Heart left ventricle (tissue), 16 donors: ENCODE measurements at regions of chr3 and their contacts with region 1.

Region 1: GRCh38 chr3:136818769-136819391 is at the start of gene SLC35G2:
- DNase-seq: peak; percentile 57 to 78 (median 77)
- ATAC-seq: peak; percentile 68 to 83 (median 78)
- H3K4me3 ChIP-seq: peak within 1 kb of the TSS; percentile 63 to 92 (median 77)
- H3K27ac ChIP-seq: peak within 1 kb of the TSS; percentile 73 to 97 (median 88)
- H3K4me1 ChIP-seq: peaks cover 0 to 32% (median 8%) of the 10 kb centered on the region in 12 donors
- H3K27me3 ChIP-seq: peaks cover 0 to 17% (median 0%) of the 10 kb centered on the region in 9 donors
- CTCF ChIP-seq: peak in 2 of 12 donors; percentile 9 to 23
- POLR2A ChIP-seq: no peak
- total RNA-seq, gene SLC35G2: 1.0 to 5.3 (median 3.6) TPM

Region 2: GRCh38 chr3:136861890-136862616 is 43.2 kb after region 1 on chr3 and contains the start of gene NCK1:
- intact Hi-C with region 1: loop called in 5 of 10 experiments (anchors 5 kb)
- DNase-seq: peak; percentile 99
- ATAC-seq: peak; percentile 99 to 100 (median 99)
- H3K4me3 ChIP-seq: peak within 1 kb of the TSS; percentile 61 to 95 (median 83)
- H3K27ac ChIP-seq: peak within 1 kb of the TSS; percentile 72 to 95 (median 90)
- H3K4me1 ChIP-seq: peaks cover 0 to 51% (median 23%) of the 10 kb centered on the region in 12 donors
- H3K27me3 ChIP-seq: no peaks in the 10 kb centered on the region
- CTCF ChIP-seq: peak in 5 of 12 donors; percentile 6 to 26 (median 17)
- POLR2A ChIP-seq: peak; percentile 19 to 92
- total RNA-seq, gene NCK1: 18.7 to 36.0 (median 23.4) TPM

Region 3: GRCh38 chr3:136929984-136930670 is 111.2 kb after region 1 on chr3:
- intact Hi-C with region 1: loop called in 2 of 10 experiments (anchors 2 to 5 kb)
- DNase-seq: peak in 4 of 5 donors; percentile 47 to 68 (median 63)
- ATAC-seq: peak; percentile 67 to 85 (median 78)
- H3K4me3 ChIP-seq: peak overlapping the region in 11 of 12 donors; percentile 8 to 57 (median 40)
- H3K27ac ChIP-seq: peak overlapping the region in 11 of 12 donors; percentile 12 to 73 (median 54)
- H3K4me1 ChIP-seq: peaks cover 0 to 58% (median 18%) of the 10 kb centered on the region in 12 donors
- H3K27me3 ChIP-seq: no peaks in the 10 kb centered on the region
- CTCF ChIP-seq: no peak
- POLR2A ChIP-seq: no peak

Region 4: DNA sequence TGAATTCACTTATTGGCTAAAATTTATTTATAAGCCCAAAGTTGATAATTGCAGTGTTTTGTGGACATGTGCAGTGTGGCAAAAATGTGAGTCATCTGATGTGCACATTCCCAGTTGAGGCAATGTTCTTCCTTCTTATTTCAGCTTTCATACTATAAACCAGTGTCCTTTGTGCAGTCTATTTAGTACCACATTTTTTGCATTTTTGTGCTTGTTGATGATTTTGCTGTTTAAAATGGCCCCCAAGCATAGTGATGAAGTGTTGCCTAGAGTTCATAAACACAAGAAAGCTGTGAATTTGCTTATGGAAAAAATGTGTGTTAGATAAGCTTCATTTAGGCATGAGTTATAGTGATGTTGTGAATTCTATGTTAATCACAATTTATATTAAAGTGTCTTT is 119.5 kb after region 1 on chr3:
- intact Hi-C with region 1: loop called in 1 of 10 experiments (anchors 5 kb)
- DNase-seq: no peak
- ATAC-seq: no peak
- H3K4me3 ChIP-seq: no peak overlapping the region
- H3K27ac ChIP-seq: peak overlapping the region in 3 of 12 donors; percentile 0 to 16 (median 11)
- H3K4me1 ChIP-seq: peaks cover 0 to 73% (median 12%) of the 10 kb centered on the region in 12 donors
- H3K27me3 ChIP-seq: no peaks in the 10 kb centered on the region
- CTCF ChIP-seq: no peak
- POLR2A ChIP-seq: no peak

Region 5: DNA sequence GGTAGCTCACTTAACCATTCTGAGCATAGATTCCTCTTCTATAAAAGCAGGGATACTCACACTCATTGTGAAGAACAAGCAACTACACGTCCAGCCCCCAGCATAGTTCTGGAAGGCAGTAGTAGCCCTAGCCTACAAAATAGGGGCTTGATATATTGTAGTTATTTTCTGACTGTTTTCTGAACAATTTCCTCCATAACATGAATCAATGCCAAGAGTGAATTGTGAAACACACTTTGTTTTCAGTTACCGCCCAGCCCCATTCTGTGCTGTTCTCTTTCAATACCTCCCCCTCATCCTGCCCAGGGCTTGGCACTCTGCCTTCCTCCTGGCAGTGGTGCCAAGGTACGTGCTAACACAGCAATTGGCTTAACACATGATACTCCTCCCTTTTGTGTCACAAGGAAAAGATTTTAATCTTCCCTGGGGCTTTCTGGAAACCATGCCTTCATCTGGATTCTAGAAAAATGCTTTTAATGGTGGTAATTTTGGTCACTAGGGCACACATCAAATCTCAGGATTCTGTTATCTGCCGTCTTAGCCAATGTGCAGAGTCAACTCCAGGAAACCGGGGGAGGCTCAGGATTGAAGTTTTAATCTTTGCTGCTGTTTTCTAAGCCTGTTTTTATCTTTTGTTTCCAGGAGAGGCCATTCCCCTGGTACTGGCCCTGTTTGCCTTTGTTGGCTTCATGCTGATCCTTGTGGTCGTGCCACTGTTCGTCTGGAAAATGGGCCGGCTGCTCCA is 176.1 kb after region 1 on chr3:
- intact Hi-C with region 1: loop called in 2 of 10 experiments (anchors 1 to 2 kb)
- DNase-seq: peak; percentile 76 to 85 (median 82)
- ATAC-seq: peak; percentile 89 to 97 (median 92)
- H3K4me3 ChIP-seq: no peak overlapping the region
- H3K27ac ChIP-seq: peak overlapping the region; percentile 54 to 89 (median 78)
- H3K4me1 ChIP-seq: peaks cover 0 to 27% (median 17%) of the 10 kb centered on the region in 12 donors
- H3K27me3 ChIP-seq: no peaks in the 10 kb centered on the region
- CTCF ChIP-seq: no peak
- POLR2A ChIP-seq: no peak

Region 6: DNA sequence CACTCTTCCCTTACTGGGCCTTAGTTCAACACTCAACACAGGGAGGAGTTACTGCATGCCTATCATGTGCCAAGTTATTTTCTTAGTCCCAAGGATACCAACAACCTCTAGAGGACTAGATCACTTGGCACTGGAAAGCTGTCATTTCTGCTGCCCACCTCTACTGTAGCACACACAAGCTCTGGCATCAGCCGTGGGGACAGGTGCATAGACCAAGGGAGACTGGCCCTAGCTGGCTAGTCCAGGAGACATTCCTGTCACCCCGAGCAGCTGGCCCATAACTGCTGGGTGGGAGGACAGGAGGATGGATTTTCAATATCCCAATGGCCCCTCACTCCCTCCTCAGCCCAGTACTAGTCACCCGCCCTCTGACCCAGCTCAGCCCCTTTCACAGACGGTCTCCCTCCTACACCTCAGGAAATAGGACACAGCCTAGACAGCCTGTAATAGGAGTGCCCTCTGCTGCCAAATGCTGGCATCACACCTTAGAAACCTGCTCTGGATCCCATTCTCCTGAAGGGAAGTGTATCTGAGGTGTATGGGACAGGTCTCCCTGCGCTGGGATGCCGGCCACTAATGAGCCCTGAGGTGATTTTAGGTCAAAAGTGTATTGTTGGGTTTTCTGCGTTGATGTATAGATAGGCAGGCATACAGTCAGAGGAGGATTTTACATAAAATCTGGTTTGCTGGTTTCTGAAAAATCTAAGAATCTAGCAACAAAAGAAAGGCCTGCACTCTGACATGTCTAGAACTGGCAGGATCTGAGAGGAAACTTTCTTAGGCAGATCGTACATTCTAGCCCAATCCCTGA is 1299.9 kb after region 1 on chr3:
- intact Hi-C with region 1: loop called in 1 of 10 experiments (anchors 10 kb)
- DNase-seq: peak in 4 of 5 donors; percentile 54 to 74 (median 71)
- ATAC-seq: peak; percentile 40 to 69 (median 64)
- H3K4me3 ChIP-seq: no peak overlapping the region
- H3K27ac ChIP-seq: no peak overlapping the region
- H3K4me1 ChIP-seq: peaks cover 0 to 26% (median 9%) of the 10 kb centered on the region in 12 donors
- H3K27me3 ChIP-seq: no peaks in the 10 kb centered on the region
- CTCF ChIP-seq: peak; percentile 69 to 86 (median 81)
- POLR2A ChIP-seq: no peak

Region 7: DNA sequence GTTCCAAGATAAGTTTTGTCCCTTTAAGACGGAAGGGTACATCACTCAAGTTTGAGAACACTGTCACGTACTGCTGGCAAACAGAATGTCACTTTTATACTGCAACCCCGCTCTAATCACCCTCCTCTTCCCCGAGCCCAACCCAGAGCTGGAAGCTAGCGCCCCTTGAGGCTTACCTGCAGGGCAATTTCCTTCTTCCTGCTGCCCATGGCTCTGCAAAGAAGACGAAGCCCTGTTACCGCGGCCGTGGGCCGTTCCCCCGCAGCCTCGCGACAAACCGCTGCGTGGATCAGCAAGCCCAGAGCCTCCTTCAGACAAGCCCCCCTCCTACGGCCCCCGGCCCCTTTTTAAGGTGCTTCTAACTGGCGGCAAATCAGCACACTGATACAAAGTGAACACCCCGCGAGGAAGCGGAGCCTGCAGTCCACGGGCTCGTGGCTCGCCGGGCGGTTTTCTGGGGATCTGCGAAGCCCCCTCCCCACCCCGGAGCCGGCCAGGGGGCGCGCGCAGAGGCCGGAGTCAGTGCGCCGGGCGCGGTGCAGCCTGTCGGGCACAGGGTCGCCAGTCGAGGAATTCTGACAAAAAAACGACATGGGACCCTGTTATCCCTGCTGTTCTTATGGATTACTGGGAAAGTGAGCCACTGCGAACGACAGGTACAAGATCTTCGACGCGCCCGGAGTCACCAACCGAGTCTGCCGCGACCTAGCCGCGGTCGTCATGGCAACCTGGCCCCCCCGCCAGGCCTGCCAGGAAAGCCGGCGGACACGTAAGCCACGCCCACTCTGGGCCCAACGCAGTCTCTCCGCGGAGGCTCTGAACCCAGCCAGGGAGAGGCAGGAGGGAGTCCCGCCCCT is 1510.5 kb after region 1 on chr3 and contains the start of gene NME9:
- intact Hi-C with region 1: no loop called
- DNase-seq: peak; percentile 89 to 94 (median 92)
- ATAC-seq: peak; percentile 94 to 98 (median 96)
- H3K4me3 ChIP-seq: peak within 1 kb of the TSS; percentile 47 to 72 (median 66)
- H3K27ac ChIP-seq: peak within 1 kb of the TSS in 9 of 12 donors; percentile 16 to 69 (median 53)
- H3K4me1 ChIP-seq: peaks cover 0 to 18% (median 9%) of the 10 kb centered on the region in 12 donors
- H3K27me3 ChIP-seq: no peaks in the 10 kb centered on the region
- CTCF ChIP-seq: peak; percentile 17 to 62 (median 42)
- POLR2A ChIP-seq: no peak
- total RNA-seq, gene NME9: not detected